Activated CD8-positive, alpha-beta T cell treated with anti-CD3 and anti-CD28 coated beads for 36 hours (primary cell): ENCODE measurements at regions of chr12 and their contacts with region 1.

Region 1: GRCh38 chr12:39319187-39319586 is 123.7 kb downstream of the KIF21A start:
- DNase-seq: no peak
- ATAC-seq: no peak
- H3K4me3 Mint-ChIP-seq: no peak overlapping the region
- H3K27ac Mint-ChIP-seq: no peak overlapping the region
- H3K4me1 Mint-ChIP-seq: no peaks in the 10 kb centered on the region
- H3K27me3 Mint-ChIP-seq: no peaks in the 10 kb centered on the region
- CTCF ChIP-seq: no peak

Region 2: DNA sequence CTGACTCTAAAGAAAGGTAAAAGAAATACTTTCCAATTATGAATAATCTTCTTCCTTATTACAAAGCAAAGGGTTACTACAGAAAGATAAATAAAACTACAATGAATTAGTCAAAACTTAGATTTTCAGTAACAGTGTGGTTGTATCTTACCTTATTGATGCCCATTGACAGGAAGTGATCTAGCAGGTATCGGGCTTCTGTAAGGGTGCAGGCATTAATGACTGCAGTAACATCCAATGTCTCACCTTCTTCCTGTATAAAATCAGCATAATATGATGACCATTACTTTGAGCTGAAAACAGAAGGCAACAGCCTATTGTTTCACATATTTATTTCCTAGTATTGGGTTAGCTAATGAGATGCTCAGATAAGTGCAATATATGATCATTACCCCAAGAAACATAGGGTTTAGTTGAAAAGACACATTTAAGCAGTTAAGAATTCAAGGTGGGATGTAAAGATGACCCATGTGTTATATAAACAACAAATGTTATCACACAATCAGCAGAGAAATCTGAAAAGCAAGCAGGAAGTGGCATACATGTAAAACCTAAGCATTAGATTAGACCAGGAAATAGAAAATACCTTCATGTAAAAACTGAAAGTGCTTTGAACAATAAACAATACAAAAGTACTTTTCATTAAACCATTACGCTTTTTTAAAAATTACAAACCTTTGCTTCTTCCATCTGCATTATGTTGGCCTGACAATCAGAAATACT is 12.5 kb after region 1 on chr12:
- CTCF ChIA-PET with region 1: interaction called, 12 read pairs
- POLR2A ChIA-PET with region 1: no interaction called
- intact Hi-C with region 1: no loop called
- DNase-seq: no peak
- ATAC-seq: peak; percentile 45
- H3K4me3 Mint-ChIP-seq: no peak overlapping the region
- H3K27ac Mint-ChIP-seq: peak overlapping the region; percentile 34
- H3K4me1 Mint-ChIP-seq: peaks cover 16% of the 10 kb centered on the region
- H3K27me3 Mint-ChIP-seq: no peaks in the 10 kb centered on the region
- CTCF ChIP-seq: no peak

Region 3: GRCh38 chr12:39443081-39443928 is 124.1 kb after region 1 on chr12 and contains the start of gene KIF21A:
- CTCF ChIA-PET with region 1: interaction called, 7 read pairs
- POLR2A ChIA-PET with region 1: interaction called, 3 read pairs
- intact Hi-C with region 1: loop called (anchors 10 kb)
- DNase-seq: peak; percentile 91
- ATAC-seq: peak; percentile 95
- H3K4me3 Mint-ChIP-seq: peak within 1 kb of the TSS; percentile 89
- H3K27ac Mint-ChIP-seq: peak within 1 kb of the TSS; percentile 94
- H3K4me1 Mint-ChIP-seq: peaks cover 20% of the 10 kb centered on the region
- H3K27me3 Mint-ChIP-seq: peaks cover 4% of the 10 kb centered on the region
- CTCF ChIP-seq: peak; percentile 67
- total RNA-seq, gene KIF21A: 18.0 to 20.0 TPM

Region 4: GRCh38 chr12:39692258-39692853 is 373.2 kb after region 1 on chr12:
- CTCF ChIA-PET with region 1: interaction called, 3 read pairs
- POLR2A ChIA-PET with region 1: no interaction called
- intact Hi-C with region 1: loop called (anchors 5 kb)
- DNase-seq: no peak
- ATAC-seq: peak; percentile 55
- H3K4me3 Mint-ChIP-seq: no peak overlapping the region
- H3K27ac Mint-ChIP-seq: no peak overlapping the region
- H3K4me1 Mint-ChIP-seq: no peaks in the 10 kb centered on the region
- H3K27me3 Mint-ChIP-seq: no peaks in the 10 kb centered on the region
- CTCF ChIP-seq: peak; percentile 70